PC-9 (cell line): ENCODE measurements at regions of chr3 and their contacts with region 1.

Region 1: GRCh38 chr3:127590593-127591477 is at the start of gene TPRA1:
- DNase-seq: peak; percentile 94 to 96
- H3K4me3 ChIP-seq: peak within 1 kb of the TSS; percentile 70
- H3K27ac ChIP-seq: peak within 1 kb of the TSS; percentile 92
- H3K4me1 ChIP-seq: peaks cover 22% of the 10 kb centered on the region
- H3K27me3 ChIP-seq: no peaks in the 10 kb centered on the region
- CTCF ChIP-seq: no peak
- total RNA-seq, gene TPRA1: 58.5 and 66.5 TPM in 2 replicates

Region 2: DNA sequence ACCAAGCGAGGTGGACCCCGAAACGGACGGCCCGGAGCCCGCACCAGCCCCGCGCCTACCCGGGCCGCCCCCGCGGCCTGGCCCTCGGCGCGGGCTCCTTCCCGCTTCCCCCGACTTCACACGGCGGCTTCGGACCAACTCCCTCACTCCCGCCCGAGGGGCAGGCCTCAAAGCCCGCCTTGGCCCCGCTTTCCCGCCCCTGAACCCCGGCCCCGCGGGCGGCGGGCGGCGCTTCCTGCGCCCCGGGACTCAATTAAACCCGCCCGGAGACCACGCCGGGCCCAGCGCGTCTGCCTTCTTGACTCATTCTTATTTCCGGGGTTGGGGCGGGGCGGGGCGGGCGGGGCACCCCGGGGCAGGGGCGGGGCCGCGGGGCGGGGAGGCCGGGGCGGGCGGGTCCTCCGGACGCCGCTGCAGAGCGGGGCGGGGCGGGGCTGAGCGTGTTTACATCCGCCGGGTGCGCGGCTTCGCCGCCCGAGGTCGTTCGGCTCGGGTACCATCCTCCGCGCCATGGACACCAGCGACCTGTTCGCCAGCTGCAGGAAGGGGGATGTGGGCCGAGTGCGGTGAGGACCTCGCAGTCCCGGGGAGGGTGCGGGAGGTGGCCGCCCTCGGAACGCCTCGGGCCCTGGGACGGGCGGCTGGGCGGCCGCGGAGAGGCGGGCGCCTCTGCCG is 81.8 kb after region 1 on chr3 and contains the start of gene ABTB1:
- CTCF ChIA-PET with region 1: no interaction called
- POLR2A ChIA-PET with region 1: no interaction called
- intact Hi-C with region 1: loop called (anchors 2 kb)
- DNase-seq: peak; percentile 54 to 79
- H3K4me3 ChIP-seq: peak within 1 kb of the TSS; percentile 85
- H3K27ac ChIP-seq: peak within 1 kb of the TSS; percentile 56
- H3K4me1 ChIP-seq: peaks cover 7% of the 10 kb centered on the region; the same call in 1 of the 2 replicates
- H3K27me3 ChIP-seq: no peaks in the 10 kb centered on the region
- CTCF ChIP-seq: no peak
- total RNA-seq, gene ABTB1: 39.1 and 57.1 TPM in 2 replicates

Region 3: DNA sequence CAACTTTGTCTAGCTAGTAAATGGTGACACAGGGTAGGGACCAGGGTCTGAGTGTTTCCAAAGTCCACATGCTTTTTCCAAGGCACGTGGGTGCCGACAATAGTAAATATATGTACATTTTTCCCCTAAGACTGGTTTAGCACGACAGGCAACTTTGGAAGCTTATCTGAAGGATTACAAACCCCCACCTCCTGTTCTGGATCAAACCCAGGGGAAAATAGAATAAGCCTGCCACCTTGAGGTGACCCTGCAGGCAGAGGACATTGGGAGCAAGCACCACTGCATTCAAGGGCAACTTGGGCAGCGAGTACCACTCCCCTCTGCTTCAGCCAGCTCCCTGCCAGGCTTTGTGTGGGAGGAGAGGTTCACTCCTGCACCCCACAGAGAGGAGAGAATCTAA is 369.0 kb after region 1 on chr3:
- CTCF ChIA-PET with region 1: interaction called, 8 read pairs
- POLR2A ChIA-PET with region 1: interaction called, 5 read pairs
- intact Hi-C with region 1: loop called (anchors 5 kb)
- DNase-seq: peak; percentile 69 to 85
- H3K4me3 ChIP-seq: no peak overlapping the region
- H3K27ac ChIP-seq: no peak overlapping the region
- H3K4me1 ChIP-seq: peaks cover 34% of the 10 kb centered on the region
- H3K27me3 ChIP-seq: no peaks in the 10 kb centered on the region
- CTCF ChIP-seq: peak; percentile 63

Region 4: GRCh38 chr3:128051837-128052594 is 461.2 kb after region 1 on chr3 and contains the start of gene SEC61A1:
- CTCF ChIA-PET with region 1: no interaction called
- POLR2A ChIA-PET with region 1: no interaction called
- intact Hi-C with region 1: loop called (anchors 5 kb)
- DNase-seq: peak; percentile 78 to 98
- H3K4me3 ChIP-seq: peak within 1 kb of the TSS; percentile 99
- H3K27ac ChIP-seq: peak within 1 kb of the TSS; percentile 81
- H3K4me1 ChIP-seq: peaks cover 26% of the 10 kb centered on the region
- H3K27me3 ChIP-seq: no peaks in the 10 kb centered on the region
- CTCF ChIP-seq: no peak
- total RNA-seq, gene SEC61A1: 110 and 189 TPM in 2 replicates

Region 5: GRCh38 chr3:128487813-128488635 is 897.2 kb after region 1 on chr3:
- CTCF ChIA-PET with region 1: no interaction called
- POLR2A ChIA-PET with region 1: no interaction called
- intact Hi-C with region 1: loop called (anchors 10 kb)
- DNase-seq: peak; percentile 81 to 94
- H3K4me3 ChIP-seq: peak overlapping the region; percentile 93
- H3K27ac ChIP-seq: peak overlapping the region; percentile 7; the same call in 1 of the 2 replicates
- H3K4me1 ChIP-seq: peaks cover 44% of the 10 kb centered on the region
- H3K27me3 ChIP-seq: no peaks in the 10 kb centered on the region
- CTCF ChIP-seq: no peak

Region 6: DNA sequence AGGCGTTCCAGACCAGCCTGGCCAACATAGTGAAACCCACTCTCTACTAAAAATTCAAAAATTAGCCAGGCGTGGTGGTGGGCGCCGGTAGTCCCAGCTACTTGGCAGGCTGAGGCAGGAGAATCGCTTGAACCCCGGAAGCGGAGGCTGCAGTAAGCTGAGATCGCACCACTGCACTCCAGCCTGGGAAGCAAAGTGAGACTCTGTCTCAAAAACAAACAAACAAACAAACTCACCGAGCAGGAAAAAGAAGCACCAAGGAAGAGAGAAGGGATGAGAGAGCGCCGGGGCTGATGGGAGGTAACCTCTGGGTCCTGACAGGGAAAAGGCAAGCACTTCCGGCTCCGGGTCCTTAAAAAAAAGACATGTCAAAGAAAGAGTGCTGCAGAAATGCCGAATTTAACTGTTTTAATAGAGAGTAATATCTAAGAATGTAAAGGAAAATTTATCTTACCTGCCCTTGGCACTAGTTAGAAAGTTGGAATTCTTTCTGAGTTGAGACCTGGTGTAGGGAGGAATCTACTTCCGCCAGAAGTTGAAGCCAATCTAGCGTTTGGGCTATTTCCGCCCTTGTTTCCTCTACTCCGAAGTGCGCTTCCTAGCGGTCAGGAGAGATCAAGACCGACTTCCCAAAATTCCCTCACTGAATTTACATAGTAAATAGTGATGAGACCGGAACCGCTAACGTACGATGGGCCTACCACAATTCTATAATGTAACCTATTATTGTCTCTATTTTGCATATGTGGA is 1808.5 kb after region 1 on chr3:
- CTCF ChIA-PET with region 1: no interaction called
- POLR2A ChIA-PET with region 1: interaction called, 11 read pairs
- intact Hi-C with region 1: no loop called
- DNase-seq: peak; percentile 81 to 88
- H3K4me3 ChIP-seq: peak overlapping the region; percentile 81
- H3K27ac ChIP-seq: peak overlapping the region; percentile 56
- H3K4me1 ChIP-seq: peaks cover 9% of the 10 kb centered on the region
- H3K27me3 ChIP-seq: no peaks in the 10 kb centered on the region
- CTCF ChIP-seq: peak; percentile 54